Naive thymus-derived CD4-positive, alpha-beta T cell (primary cell): ENCODE measurements at regions of chr6 and their contacts with region 1.

Region 1: GRCh38 chr6:139134817-139135581 is at the start of gene HECA:
- DNase-seq: peak; percentile 99 to 100 (median 99)
- ATAC-seq: peak; percentile 91
- H3K4me3 ChIP-seq: peak within 1 kb of the TSS; percentile 93
- H3K4me3 Mint-ChIP-seq: peak within 1 kb of the TSS; percentile 84 to 99 (median 93)
- H3K27ac ChIP-seq: peak within 1 kb of the TSS; percentile 100
- H3K27ac Mint-ChIP-seq: peak within 1 kb of the TSS; percentile 95 to 100 (median 99)
- H3K4me1 ChIP-seq: peaks cover 21 to 43% of the 10 kb centered on the region in 2 donors
- H3K4me1 Mint-ChIP-seq: peaks cover 51 to 77% (median 66%) of the 10 kb centered on the region in 7 donors
- H3K27me3 ChIP-seq: no peaks in the 10 kb centered on the region
- H3K27me3 Mint-ChIP-seq: peaks cover 0 to 2% (median 0%) of the 10 kb centered on the region in 5 donors
- total RNA-seq, gene HECA: 54.1 to 145 (median 130) TPM

Region 2: GRCh38 chr6:138817822-138818308 is 317.1 kb before region 1 on chr6:
- CTCF ChIA-PET with region 1: no interaction called
- POLR2A ChIA-PET with region 1: no interaction called
- intact Hi-C with region 1: loop called in 1 of 2 experiments (anchors 2 kb)
- DNase-seq: peak in 1 of 9 donors; percentile 28
- ATAC-seq: no peak
- H3K4me3 ChIP-seq: no peak overlapping the region
- H3K4me3 Mint-ChIP-seq: no peak overlapping the region
- H3K27ac ChIP-seq: no peak overlapping the region
- H3K27ac Mint-ChIP-seq: peak overlapping the region in 1 of 9 donors; percentile 21
- H3K4me1 ChIP-seq: no peaks in the 10 kb centered on the region
- H3K4me1 Mint-ChIP-seq: peaks cover 0 to 30% (median 0%) of the 10 kb centered on the region in 7 donors
- H3K27me3 ChIP-seq: no peaks in the 10 kb centered on the region
- H3K27me3 Mint-ChIP-seq: no peaks in the 10 kb centered on the region

Region 3: GRCh38 chr6:138912308-138912707 is 222.7 kb before region 1 on chr6:
- CTCF ChIA-PET with region 1: no interaction called
- POLR2A ChIA-PET with region 1: no interaction called
- intact Hi-C with region 1: no loop called
- DNase-seq: no peak
- ATAC-seq: no peak
- H3K4me3 ChIP-seq: no peak overlapping the region
- H3K4me3 Mint-ChIP-seq: no peak overlapping the region
- H3K27ac ChIP-seq: no peak overlapping the region
- H3K27ac Mint-ChIP-seq: peak overlapping the region in 2 of 9 donors; percentile 26 to 46
- H3K4me1 ChIP-seq: no peaks in the 10 kb centered on the region
- H3K4me1 Mint-ChIP-seq: peaks cover 0 to 5% (median 0%) of the 10 kb centered on the region in 7 donors
- H3K27me3 ChIP-seq: no peaks in the 10 kb centered on the region
- H3K27me3 Mint-ChIP-seq: no peaks in the 10 kb centered on the region

Region 4: GRCh38 chr6:139117734-139118133 is 17.3 kb before region 1 on chr6:
- CTCF ChIA-PET with region 1: interaction called, 10 read pairs
- POLR2A ChIA-PET with region 1: interaction called, 37 read pairs
- intact Hi-C with region 1: loop called in 1 of 2 experiments (anchors 1 kb)
- DNase-seq: no peak
- ATAC-seq: no peak
- H3K4me3 ChIP-seq: no peak overlapping the region
- H3K4me3 Mint-ChIP-seq: peak overlapping the region in 8 of 10 donors; percentile 14 to 79 (median 50)
- H3K27ac ChIP-seq: no peak overlapping the region
- H3K27ac Mint-ChIP-seq: peak overlapping the region in 8 of 9 donors; percentile 41 to 94 (median 74)
- H3K4me1 ChIP-seq: peaks cover 22 to 45% of the 10 kb centered on the region in 2 donors
- H3K4me1 Mint-ChIP-seq: peaks cover 26 to 59% (median 52%) of the 10 kb centered on the region in 7 donors
- H3K27me3 ChIP-seq: no peaks in the 10 kb centered on the region
- H3K27me3 Mint-ChIP-seq: no peaks in the 10 kb centered on the region

Region 5: DNA sequence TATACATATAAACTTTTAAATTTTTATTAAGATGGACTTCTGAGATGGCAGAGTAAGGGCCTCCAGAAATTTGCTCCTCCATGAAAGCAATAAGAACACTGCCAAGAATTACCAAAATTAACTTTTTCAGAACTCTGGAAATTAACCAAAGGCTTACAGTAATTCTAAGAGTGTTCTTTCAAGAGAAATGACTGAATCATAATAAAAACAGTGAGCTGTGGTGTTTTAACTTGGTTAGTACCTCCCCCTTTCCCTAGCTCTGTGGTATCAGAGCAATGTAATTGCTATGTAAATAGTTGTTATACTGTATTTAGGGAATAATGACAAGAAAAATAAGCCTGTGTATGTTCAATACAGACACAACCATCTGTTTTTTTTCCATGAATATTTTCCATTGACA is 18.9 kb after region 1 on chr6:
- CTCF ChIA-PET with region 1: interaction called, 7 read pairs
- POLR2A ChIA-PET with region 1: interaction called, 214 read pairs
- intact Hi-C with region 1: loop called (anchors 1 kb)
- DNase-seq: no peak
- ATAC-seq: no peak
- H3K4me3 ChIP-seq: no peak overlapping the region
- H3K4me3 Mint-ChIP-seq: peak overlapping the region in 9 of 10 donors; percentile 22 to 78 (median 40)
- H3K27ac ChIP-seq: no peak overlapping the region
- H3K27ac Mint-ChIP-seq: peak overlapping the region; percentile 36 to 94 (median 61)
- H3K4me1 ChIP-seq: peaks cover 58 to 78% of the 10 kb centered on the region in 2 donors
- H3K4me1 Mint-ChIP-seq: peaks cover 69 to 93% (median 82%) of the 10 kb centered on the region in 7 donors
- H3K27me3 ChIP-seq: no peaks in the 10 kb centered on the region
- H3K27me3 Mint-ChIP-seq: no peaks in the 10 kb centered on the region

Region 6: GRCh38 chr6:139173172-139173571 is 38.2 kb after region 1 on chr6:
- CTCF ChIA-PET with region 1: interaction called, 5 read pairs
- POLR2A ChIA-PET with region 1: interaction called, 31 read pairs
- intact Hi-C with region 1: loop called in 1 of 2 experiments (anchors 1 kb)
- DNase-seq: peak in 6 of 9 donors; percentile 31 to 54 (median 40)
- ATAC-seq: peak; percentile 69
- H3K4me3 ChIP-seq: no peak overlapping the region
- H3K4me3 Mint-ChIP-seq: peak overlapping the region; percentile 16 to 75 (median 60)
- H3K27ac ChIP-seq: peak overlapping the region; percentile 49
- H3K27ac Mint-ChIP-seq: peak overlapping the region; percentile 64 to 88 (median 83)
- H3K4me1 ChIP-seq: peaks cover 50 to 85% of the 10 kb centered on the region in 2 donors
- H3K4me1 Mint-ChIP-seq: peaks cover 70 to 95% (median 92%) of the 10 kb centered on the region in 7 donors
- H3K27me3 ChIP-seq: no peaks in the 10 kb centered on the region
- H3K27me3 Mint-ChIP-seq: no peaks in the 10 kb centered on the region

Region 7: GRCh38 chr6:140586426-140587061 is 1451.5 kb after region 1 on chr6:
- CTCF ChIA-PET with region 1: no interaction called
- POLR2A ChIA-PET with region 1: no interaction called
- intact Hi-C with region 1: loop called in 1 of 2 experiments (anchors 10 kb)
- DNase-seq: peak in 1 of 9 donors; percentile 35
- ATAC-seq: no peak
- H3K4me3 ChIP-seq: no peak overlapping the region
- H3K4me3 Mint-ChIP-seq: peak overlapping the region in 1 of 10 donors; percentile 53
- H3K27ac ChIP-seq: no peak overlapping the region
- H3K27ac Mint-ChIP-seq: peak overlapping the region in 2 of 9 donors; percentile 17 to 90
- H3K4me1 ChIP-seq: no peaks in the 10 kb centered on the region
- H3K4me1 Mint-ChIP-seq: peaks cover 0 to 47% (median 0%) of the 10 kb centered on the region in 7 donors
- H3K27me3 ChIP-seq: no peaks in the 10 kb centered on the region
- H3K27me3 Mint-ChIP-seq: peaks cover 0 to 5% (median 0%) of the 10 kb centered on the region in 5 donors